ENCODE measurements at regions of chr6 and their contacts with region 1.

Region 1: GRCh38 chr6:804771-805170 is 111.8 kb upstream of the EXOC2 start:
- DNase-seq: no peak
- H3K4me3 ChIP-seq: no peak overlapping the region
- H3K27ac ChIP-seq: no peak overlapping the region
- H3K4me1 ChIP-seq: no peaks in the 10 kb centered on the region
- H3K27me3 ChIP-seq: peaks cover 0 to 5% (median 0%) of the 10 kb centered on the region in 7 donors
- CTCF ChIP-seq: no peak
- POLR2A ChIP-seq: no peak

Region 2: DNA sequence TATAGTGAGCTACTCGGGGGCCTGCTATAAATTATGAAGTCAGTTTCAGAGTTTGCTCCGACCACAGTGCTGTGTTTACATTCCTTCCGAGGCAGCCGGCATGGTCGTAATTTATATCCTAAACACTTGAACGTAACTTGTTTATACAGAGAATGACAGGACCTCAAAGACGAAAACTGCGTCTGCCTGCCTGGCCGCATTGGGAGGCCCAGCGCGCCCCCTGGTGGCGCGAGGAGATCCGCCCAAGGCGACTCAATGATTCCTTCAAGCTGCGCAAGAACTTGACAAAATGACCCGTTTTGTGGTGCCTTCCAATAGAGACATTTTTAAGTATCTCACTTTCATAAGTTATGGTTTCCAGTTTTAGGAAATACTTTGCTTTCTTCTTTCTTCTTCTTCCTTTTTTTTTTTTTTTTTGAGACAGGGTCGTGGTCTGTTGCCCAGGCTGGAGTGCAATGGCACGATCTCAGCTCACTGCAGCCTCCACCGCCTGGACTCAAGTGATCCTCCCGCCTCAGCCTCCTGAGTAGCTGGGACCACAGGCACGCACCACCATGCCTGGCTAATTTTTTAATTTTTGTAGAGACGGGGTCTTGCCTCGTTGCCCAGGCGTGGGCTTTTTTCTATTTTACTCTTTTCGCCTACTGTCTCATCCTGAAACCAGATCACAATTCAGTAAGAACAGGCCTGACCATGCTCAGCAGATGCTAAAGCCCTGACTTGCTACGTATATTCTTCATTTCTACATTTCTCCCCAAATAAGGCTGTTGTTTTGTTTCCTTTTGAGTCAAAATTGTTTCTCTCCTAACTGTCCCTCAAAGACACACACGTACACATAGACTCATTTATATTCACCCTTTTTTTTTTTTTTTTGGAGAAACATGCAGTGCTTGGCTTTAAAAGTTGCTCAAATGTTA is 592.4 kb after region 1 on chr6:
- intact Hi-C with region 1: loop called (anchors 5 kb)
- DNase-seq: peak; percentile 89
- H3K4me3 ChIP-seq: no peak overlapping the region
- H3K27ac ChIP-seq: no peak overlapping the region
- H3K4me1 ChIP-seq: peaks cover 3 to 30% (median 21%) of the 10 kb centered on the region in 6 donors
- H3K27me3 ChIP-seq: peaks cover 0 to 100% (median 72%) of the 10 kb centered on the region in 7 donors
- CTCF ChIP-seq: peak; percentile 33 to 92 (median 81)
- POLR2A ChIP-seq: no peak